Left colon (tissue), 2 donors: ENCODE measurements at regions of chr10 and their contacts with region 1.

Region 1: DNA sequence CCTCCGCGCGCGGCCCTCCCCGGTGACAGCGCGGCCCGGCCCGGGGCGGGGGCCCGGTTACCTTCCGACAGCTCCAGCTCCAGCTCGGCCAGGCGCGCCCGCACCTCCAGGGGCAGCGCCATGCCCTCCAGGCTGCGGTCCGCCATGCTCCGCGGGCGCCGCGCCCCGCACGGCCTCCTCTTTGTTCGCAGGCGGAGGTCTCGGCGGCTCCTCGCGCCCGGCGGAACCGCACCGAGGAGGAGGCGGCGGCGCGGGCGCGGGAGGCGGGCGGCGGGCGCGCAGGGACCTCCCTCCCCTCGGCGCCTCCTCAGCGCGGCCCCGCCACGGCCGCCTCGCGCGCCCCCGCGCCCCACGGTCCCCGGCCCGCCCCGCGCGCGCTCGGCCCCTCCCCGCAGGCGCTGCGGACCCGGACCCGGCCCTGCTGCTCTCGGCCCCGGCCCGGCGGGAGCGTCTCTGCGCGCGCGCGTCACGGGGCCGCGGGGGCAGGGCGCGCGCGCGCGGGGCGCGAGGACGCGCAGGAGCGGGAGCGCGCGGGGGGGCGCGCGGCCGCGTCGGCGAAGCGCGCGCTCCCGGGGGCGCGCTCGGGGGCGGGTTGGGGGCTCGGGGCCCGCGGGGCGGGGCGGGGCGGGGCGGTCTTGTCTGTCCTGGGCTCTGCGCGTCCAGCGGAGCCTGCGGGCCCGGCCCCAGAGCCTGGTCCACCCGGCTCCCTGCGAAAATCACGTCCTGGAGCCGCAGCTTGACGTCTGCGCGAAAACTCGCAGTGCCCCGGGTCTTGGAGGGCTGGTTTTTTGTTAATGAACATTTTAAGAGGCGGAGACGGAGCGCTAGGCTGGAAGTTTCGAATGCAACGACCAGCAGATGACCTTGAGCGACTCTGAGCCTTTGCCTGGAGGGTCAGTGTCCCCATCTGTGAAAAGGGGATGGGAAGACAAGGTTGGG is at the start of gene DIP2C:
- DNase-seq: peak; percentile 60 to 69
- ATAC-seq: peak; percentile 86
- total RNA-seq, gene DIP2C: 11.0 to 12.2 TPM

Region 2: GRCh38 chr10:500876-501275 is 188.8 kb before region 1 on chr10:
- intact Hi-C with region 1: loop called in 1 of 2 experiments (anchors 10 kb)
- DNase-seq: peak; percentile 6 to 29
- ATAC-seq: no peak